OCI-LY7 (cell line): ENCODE measurements at regions of chr16 and their contacts with region 1.

Region 1: DNA sequence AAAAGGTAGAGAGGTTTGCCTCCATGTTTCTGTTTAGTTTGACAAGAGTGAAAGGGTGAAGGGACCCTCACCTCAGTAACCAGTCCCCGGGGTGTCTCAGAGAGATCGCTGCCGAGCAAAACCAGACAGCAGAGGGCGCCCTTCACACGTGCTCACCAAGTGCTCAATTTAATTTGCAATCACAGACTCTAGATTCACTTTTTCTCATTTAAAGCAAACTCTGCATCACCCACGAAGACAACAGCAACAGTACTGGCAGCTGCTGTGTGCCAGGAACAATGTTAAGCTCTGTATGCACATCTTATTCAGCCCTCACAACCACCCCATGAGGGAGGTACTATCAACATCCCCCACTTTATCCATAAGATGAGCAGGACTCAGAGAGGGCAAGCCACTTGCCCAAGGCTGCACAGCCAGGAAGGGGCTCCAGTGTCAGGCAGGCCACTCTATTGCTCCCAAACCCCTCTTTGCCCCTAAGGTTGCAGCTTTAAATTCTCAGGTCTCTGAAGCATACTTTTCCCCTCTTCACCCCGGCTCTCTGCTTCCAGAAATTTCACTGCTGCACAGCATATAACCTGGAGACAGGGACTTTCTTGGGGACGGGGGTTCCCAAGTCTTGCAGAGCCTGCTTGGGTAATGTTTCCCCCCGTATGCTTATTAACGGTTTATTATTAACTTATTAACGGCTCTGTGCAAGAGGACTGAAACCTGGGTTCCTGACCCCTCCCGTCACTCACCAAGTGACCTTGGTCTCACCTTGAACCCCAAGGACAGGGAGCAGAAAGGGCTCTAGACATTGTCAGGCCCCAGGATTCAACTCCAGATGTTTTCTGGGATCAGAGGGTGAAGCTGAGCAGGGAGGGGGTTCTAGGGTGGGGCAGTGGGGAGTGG is 70.9 kb downstream of the CNGB1 start:
- DNase-seq: peak; percentile 68
- H3K4me3 ChIP-seq: no peak overlapping the region
- H3K27ac ChIP-seq: no peak overlapping the region
- H3K4me1 ChIP-seq: no peaks in the 10 kb centered on the region
- CTCF ChIP-seq: peak; percentile 98

Region 2: DNA sequence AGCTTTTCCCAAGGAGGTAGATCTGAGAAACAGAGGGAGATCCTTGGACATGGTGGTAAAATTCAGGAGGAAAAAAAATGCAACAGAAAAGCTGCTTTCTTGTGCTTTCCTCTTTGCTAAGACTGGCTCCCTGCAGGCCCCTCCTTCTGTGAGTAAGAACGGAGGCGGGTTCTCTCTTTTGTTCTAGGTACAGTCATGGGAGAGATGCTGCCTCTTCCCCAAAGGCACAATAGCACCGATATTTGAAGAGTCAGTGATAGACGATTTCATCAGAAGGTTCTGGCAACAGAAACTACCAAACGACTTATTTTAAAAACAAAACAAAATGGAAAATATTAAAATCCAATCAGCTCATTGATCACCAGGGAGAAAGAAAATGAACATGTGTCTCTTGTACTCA is 65.1 kb before region 1 on chr16:
- CTCF ChIA-PET with region 1: no interaction called
- POLR2A ChIA-PET with region 1: no interaction called
- intact Hi-C with region 1: no loop called
- DNase-seq: no peak
- H3K4me3 ChIP-seq: no peak overlapping the region
- H3K27ac ChIP-seq: no peak overlapping the region
- H3K4me1 ChIP-seq: no peaks in the 10 kb centered on the region
- CTCF ChIP-seq: no peak

Region 3: GRCh38 chr16:57911743-57912142 is 11.7 kb after region 1 on chr16:
- CTCF ChIA-PET with region 1: no interaction called
- POLR2A ChIA-PET with region 1: no interaction called
- intact Hi-C with region 1: no loop called
- DNase-seq: no peak
- H3K4me3 ChIP-seq: no peak overlapping the region
- H3K27ac ChIP-seq: no peak overlapping the region
- H3K4me1 ChIP-seq: no peaks in the 10 kb centered on the region
- CTCF ChIP-seq: no peak

Region 4: DNA sequence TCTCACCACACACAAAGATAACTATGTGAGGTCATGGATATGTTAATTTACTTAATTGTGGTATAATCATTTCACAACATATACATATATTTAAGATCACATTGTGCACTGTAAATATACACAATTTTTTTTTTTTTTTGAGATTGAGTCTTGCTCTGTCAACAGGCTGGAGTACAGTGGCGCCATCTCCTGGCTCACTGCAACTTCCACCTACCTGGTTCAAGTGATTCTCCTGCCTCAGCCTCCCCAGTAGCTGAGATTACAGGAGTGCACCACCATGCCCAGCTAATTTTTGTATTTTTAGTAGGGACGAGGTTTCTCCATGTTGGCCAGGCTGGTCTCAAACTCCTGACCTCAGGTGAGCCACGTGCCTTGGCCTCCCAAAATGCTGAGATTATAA is 406.3 kb after region 1 on chr16:
- CTCF ChIA-PET with region 1: no interaction called
- POLR2A ChIA-PET with region 1: no interaction called
- intact Hi-C with region 1: loop called (anchors 10 kb)
- DNase-seq: peak; percentile 24
- H3K4me3 ChIP-seq: no peak overlapping the region
- H3K27ac ChIP-seq: no peak overlapping the region
- H3K4me1 ChIP-seq: no peaks in the 10 kb centered on the region
- CTCF ChIP-seq: peak; percentile 71